ENCODE measurements at regions of chr3 and their contacts with region 1.

Region 1: GRCh38 chr3:56980798-56981390 is 79.6 kb upstream of the SPATA12 start:
- DNase-seq: peak; percentile 82
- ATAC-seq: peak; percentile 95
- H3K4me3 Mint-ChIP-seq: no peak overlapping the region
- H3K27ac Mint-ChIP-seq: peak overlapping the region; percentile 78
- H3K4me1 Mint-ChIP-seq: peaks cover 23% of the 10 kb centered on the region
- H3K27me3 Mint-ChIP-seq: no peaks in the 10 kb centered on the region

Region 2: GRCh38 chr3:56556908-56557830 is 423.7 kb before region 1 on chr3 and contains the start of gene CCDC66:
- CTCF ChIA-PET with region 1: no interaction called
- POLR2A ChIA-PET with region 1: no interaction called
- intact Hi-C with region 1: loop called in 1 of 2 experiments (anchors 2 kb)
- DNase-seq: peak; percentile 97
- ATAC-seq: peak; percentile 97
- H3K4me3 Mint-ChIP-seq: peak within 1 kb of the TSS; percentile 93
- H3K27ac Mint-ChIP-seq: peak within 1 kb of the TSS; percentile 99
- H3K4me1 Mint-ChIP-seq: peaks cover 20% of the 10 kb centered on the region
- H3K27me3 Mint-ChIP-seq: no peaks in the 10 kb centered on the region
- total RNA-seq, gene CCDC66: 23.5 to 28.5 TPM

Region 3: DNA sequence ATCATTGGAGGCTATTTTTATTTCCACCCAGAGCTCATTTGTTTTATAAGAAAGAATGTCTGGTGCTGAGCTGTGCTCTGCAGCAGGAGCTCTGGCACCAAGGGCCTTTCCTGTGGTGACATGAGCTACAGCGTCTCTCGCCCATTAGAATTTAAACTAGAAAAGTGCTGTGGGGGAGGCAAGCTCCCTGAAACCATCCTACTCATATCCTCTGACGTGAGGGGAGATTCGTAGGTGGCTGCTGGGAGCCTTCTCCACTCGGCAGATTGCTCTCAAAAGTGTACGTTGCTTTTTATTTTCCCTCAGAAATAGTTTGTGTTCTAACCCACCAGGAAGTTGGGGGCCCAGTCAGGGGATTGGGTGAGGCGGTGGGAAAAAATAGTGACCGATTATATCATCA is 102.8 kb before region 1 on chr3:
- CTCF ChIA-PET with region 1: no interaction called
- POLR2A ChIA-PET with region 1: no interaction called
- intact Hi-C with region 1: loop called (anchors 1 to 5 kb)
- DNase-seq: peak; percentile 79
- ATAC-seq: peak; percentile 87
- H3K4me3 Mint-ChIP-seq: peak overlapping the region; percentile 64
- H3K27ac Mint-ChIP-seq: peak overlapping the region; percentile 94
- H3K4me1 Mint-ChIP-seq: peaks cover 90% of the 10 kb centered on the region
- H3K27me3 Mint-ChIP-seq: no peaks in the 10 kb centered on the region

Region 4: DNA sequence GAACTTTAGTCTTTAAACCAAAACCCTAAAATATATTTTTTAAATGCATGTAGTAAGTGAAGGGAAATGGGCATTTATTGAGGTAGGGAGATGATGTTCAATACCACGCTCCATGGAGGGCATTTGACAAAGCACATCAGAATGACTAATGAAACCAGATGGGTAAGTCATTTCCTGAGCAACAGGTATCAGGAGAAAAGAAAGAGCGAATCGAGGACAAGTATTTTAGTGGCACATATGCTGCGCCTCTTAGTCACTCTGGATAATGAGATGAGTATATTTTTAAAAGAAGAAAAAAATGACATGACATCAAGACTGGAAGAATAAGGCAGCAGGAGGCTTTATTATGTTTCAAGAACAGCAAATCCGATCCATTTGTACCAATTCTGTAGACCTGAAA is 50.2 kb before region 1 on chr3:
- CTCF ChIA-PET with region 1: no interaction called
- POLR2A ChIA-PET with region 1: no interaction called
- intact Hi-C with region 1: loop called (anchors 2 kb)
- DNase-seq: peak; percentile 42
- ATAC-seq: peak; percentile 98
- H3K4me3 Mint-ChIP-seq: peak overlapping the region; percentile 21
- H3K27ac Mint-ChIP-seq: peak overlapping the region; percentile 86
- H3K4me1 Mint-ChIP-seq: peaks cover 73% of the 10 kb centered on the region
- H3K27me3 Mint-ChIP-seq: no peaks in the 10 kb centered on the region

Region 5: DNA sequence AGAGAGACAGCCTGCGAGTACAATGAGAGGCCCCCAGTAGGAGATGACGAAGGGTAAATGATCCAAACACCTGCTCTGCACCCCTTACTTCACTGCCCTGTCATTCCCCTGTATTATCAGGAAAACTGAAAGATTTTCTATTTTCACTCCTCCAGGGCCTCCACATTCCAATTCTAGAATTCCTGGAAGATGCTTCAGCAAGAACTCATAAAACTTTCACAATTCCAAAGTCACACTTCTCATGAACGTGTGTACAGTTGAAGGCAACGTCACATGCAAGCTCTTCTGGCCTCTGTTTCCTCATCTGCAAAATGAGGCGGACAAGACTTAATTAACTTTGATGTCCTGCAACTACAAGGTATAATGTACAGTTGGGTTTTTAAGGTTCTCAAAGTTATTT is 16.8 kb after region 1 on chr3:
- CTCF ChIA-PET with region 1: interaction called, 15 read pairs
- POLR2A ChIA-PET with region 1: interaction called, 4 read pairs
- intact Hi-C with region 1: no loop called
- DNase-seq: no peak
- ATAC-seq: no peak
- H3K4me3 Mint-ChIP-seq: no peak overlapping the region
- H3K27ac Mint-ChIP-seq: no peak overlapping the region
- H3K4me1 Mint-ChIP-seq: peaks cover 3% of the 10 kb centered on the region
- H3K27me3 Mint-ChIP-seq: no peaks in the 10 kb centered on the region